Right cardiac atrium (tissue), 5 donors: ENCODE measurements at regions of chr14 and their contacts with region 1.

Region 1: GRCh38 chr14:49633640-49634546 is 1.2 kb downstream of the DNAAF2 start:
- DNase-seq: peak; percentile 95 to 97 (median 97)
- ATAC-seq: peak; percentile 95 to 96
- H3K4me3 ChIP-seq: peak overlapping the region; percentile 74
- H3K27ac ChIP-seq: peak overlapping the region; percentile 90
- H3K4me1 ChIP-seq: peaks cover 2% of the 10 kb centered on the region
- H3K27me3 ChIP-seq: no peaks in the 10 kb centered on the region

Region 2: GRCh38 chr14:49767562-49768300 is 133.8 kb after region 1 on chr14 and contains the start of gene KLHDC2:
- intact Hi-C with region 1: loop called in 2 of 4 experiments (anchors 10 kb)
- DNase-seq: peak; percentile 91 to 97 (median 96)
- ATAC-seq: peak; percentile 93 to 97
- H3K4me3 ChIP-seq: peak within 1 kb of the TSS; percentile 90
- H3K27ac ChIP-seq: peak within 1 kb of the TSS; percentile 94
- H3K4me1 ChIP-seq: peaks cover 4% of the 10 kb centered on the region
- H3K27me3 ChIP-seq: no peaks in the 10 kb centered on the region
- total RNA-seq, gene KLHDC2: 71.5 to 91.9 (median 74.1) TPM